ENCODE measurements at regions of chr11 and their contacts with region 1.

Region 1: DNA sequence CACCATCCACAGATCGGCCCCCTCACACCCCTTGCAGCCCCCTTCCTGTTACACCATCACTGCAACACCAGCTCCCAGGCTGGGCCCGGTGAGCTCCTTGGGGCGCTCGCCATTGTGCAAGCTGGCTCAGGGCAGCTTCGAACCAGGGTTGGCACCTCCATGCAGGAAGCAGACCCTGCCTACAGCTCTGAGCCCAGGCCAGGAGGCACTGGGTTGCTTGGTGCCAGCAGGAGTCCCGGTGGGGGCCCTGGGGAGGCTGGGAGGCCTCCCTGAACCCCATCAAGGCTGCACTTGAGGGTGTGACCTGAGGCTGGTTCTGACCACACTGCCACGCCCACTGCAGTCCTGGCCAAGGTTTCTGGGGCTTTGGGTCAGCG is 417.1 kb downstream of the CTTN start:
- DNase-seq: no peak
- ATAC-seq: no peak
- H3K4me3 Mint-ChIP-seq: no peak overlapping the region
- H3K27ac Mint-ChIP-seq: no peak overlapping the region
- H3K4me1 Mint-ChIP-seq: no peaks in the 10 kb centered on the region
- H3K27me3 Mint-ChIP-seq: peaks cover 6% of the 10 kb centered on the region

Region 2: DNA sequence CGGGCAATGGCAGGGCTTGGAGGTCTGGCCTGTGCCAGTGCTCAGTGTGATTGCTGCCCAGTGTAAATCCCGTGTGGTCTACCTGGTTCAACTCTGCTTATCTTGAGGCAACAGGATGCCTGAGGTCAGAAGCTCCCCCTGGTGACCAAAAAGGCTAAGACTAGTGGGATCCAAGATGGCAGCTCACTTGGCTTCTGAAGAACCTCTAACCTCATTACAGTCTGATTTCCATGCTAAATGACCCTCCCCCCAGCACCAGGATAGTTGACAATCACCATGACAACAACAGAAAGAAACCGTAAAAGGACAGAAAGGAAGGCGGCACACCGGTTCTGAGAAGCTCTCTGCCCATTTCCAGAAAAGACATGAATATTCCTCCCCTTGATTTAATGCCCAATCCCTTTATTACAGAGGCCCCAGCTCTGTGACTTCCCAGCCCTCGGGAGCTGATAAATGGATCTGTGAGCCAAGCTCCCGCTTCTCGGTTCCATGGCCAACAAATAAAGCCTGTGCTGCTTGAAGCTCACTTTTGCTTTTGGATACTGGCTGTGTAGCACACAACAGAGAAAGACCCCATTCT is 18.7 kb before region 1 on chr11:
- CTCF ChIA-PET with region 1: no interaction called
- POLR2A ChIA-PET with region 1: no interaction called
- intact Hi-C with region 1: no loop called
- DNase-seq: no peak
- ATAC-seq: no peak
- H3K4me3 Mint-ChIP-seq: no peak overlapping the region
- H3K27ac Mint-ChIP-seq: no peak overlapping the region
- H3K4me1 Mint-ChIP-seq: no peaks in the 10 kb centered on the region
- H3K27me3 Mint-ChIP-seq: no peaks in the 10 kb centered on the region

Region 3: DNA sequence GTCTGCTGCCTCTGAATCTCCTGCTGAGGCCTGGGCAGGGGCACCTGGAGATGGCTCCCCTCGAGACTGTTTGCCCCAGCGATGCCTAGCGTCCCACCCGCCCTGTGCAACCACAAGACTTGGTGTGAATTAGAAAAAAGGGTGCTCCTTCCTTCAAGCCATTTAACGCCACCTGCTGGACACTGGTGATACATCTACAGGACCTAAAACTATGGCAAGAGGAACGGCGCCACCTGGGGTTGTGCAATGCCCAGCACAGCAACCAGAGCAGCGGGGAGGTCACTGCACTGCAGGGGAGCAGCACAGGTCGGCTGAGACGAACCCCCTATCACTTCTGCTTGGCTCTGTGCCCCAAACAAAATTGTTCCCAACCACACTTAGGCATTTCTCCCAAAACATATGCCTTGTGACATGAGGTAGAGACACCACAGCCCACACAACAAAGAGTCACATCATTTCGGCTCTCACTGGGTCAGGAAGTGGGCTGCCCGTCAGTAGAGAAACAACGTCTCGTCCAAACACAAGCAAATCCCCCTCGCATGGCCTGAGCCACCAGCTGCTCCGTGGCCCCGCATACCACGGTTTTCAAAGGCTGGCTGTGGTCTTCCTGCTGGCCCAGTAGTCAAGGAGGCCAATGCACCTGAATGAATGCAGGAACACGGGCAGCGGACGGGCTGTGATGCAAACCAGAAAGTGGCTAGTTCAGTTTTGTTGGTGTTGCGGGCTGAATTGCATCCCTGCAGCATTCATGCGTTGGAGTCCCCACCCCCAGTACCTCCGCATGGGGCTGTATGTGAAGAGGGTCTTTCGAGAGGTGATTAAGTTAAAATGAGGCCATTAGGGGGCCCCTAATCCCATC is 265.0 kb after region 1 on chr11:
- CTCF ChIA-PET with region 1: interaction called, 4 read pairs
- POLR2A ChIA-PET with region 1: no interaction called
- intact Hi-C with region 1: loop called in 1 of 2 experiments (anchors 1 kb)
- DNase-seq: peak; percentile 82
- ATAC-seq: peak; percentile 68
- H3K4me3 Mint-ChIP-seq: no peak overlapping the region
- H3K27ac Mint-ChIP-seq: no peak overlapping the region
- H3K4me1 Mint-ChIP-seq: no peaks in the 10 kb centered on the region
- H3K27me3 Mint-ChIP-seq: peaks cover 8% of the 10 kb centered on the region

Region 4: GRCh38 chr11:71251151-71251721 is 435.8 kb after region 1 on chr11:
- CTCF ChIA-PET with region 1: no interaction called
- POLR2A ChIA-PET with region 1: no interaction called
- intact Hi-C with region 1: no loop called
- DNase-seq: peak; percentile 12
- ATAC-seq: no peak
- H3K4me3 Mint-ChIP-seq: no peak overlapping the region
- H3K27ac Mint-ChIP-seq: no peak overlapping the region
- H3K4me1 Mint-ChIP-seq: no peaks in the 10 kb centered on the region
- H3K27me3 Mint-ChIP-seq: peaks cover 48% of the 10 kb centered on the region

Region 5: DNA sequence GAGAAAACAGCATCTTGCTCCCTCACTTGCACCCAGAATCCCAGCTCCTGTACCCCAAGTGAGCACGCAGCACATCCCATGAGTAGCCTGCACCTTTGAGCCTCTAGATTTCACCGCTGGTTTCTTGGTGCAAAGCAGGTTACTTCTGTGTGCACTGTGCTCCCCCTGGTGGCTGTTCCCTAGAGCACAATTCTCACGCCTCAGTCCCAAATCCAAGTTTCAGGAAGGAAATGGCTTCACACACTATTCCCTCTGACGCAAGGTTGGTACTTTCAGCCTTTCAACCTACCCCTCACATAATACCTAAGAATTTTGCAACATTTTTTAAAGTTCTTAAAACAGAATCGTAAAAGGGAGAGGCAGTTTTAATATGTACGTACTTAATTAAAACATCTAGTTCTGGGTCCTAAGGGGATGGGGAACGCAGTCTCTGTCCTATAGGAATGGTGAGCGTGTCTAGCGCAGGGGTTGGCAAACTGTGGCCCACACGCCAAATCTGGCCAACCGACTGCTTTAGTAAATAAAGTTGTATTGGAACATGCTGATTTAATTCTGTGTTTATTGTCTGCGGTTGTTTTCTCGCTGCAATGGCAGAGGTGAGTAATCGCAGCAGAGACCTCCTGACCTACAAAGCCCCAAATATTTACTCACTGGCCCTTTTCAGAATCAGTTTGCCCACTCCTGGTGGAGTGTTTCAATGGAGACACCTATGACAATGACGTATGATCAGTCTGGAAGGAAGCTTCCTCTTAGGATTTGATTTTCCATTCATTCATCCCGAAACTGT is 605.2 kb after region 1 on chr11:
- CTCF ChIA-PET with region 1: no interaction called
- POLR2A ChIA-PET with region 1: no interaction called
- intact Hi-C with region 1: loop called in 1 of 2 experiments (anchors 1 kb)
- DNase-seq: peak; percentile 51
- ATAC-seq: no peak
- H3K4me3 Mint-ChIP-seq: no peak overlapping the region
- H3K27ac Mint-ChIP-seq: no peak overlapping the region
- H3K4me1 Mint-ChIP-seq: peaks cover 1% of the 10 kb centered on the region
- H3K27me3 Mint-ChIP-seq: no peaks in the 10 kb centered on the region

Measured in activated CD4-positive, alpha-beta T cell treated with anti-CD3 and anti-CD28 coated beads for 36 hours (primary cell).